A673 (cell line): ENCODE measurements at regions of chr4 and their contacts with region 1.

Region 1: DNA sequence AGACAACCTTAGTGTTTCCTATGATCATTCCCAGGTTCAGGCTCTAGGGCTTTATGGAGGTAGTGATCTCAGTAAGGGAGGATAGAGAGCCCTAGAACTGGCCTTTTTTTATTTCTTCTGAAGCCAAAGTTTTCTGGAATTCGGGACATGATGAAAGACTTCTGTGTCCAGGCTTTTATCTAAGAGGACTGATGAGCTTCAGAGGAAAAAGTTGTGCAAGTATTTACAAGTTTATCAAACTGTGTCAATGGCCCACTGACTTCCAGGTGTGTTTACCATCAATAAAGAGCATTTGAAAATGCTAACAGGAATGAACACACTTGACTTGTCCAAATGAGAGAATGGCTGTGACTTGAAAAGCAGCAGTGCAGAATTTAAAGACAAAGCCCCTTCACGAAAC is 254.6 kb downstream of the DCTD start:
- DNase-seq: no peak
- H3K4me3 ChIP-seq: no peak overlapping the region
- H3K27ac ChIP-seq: no peak overlapping the region
- H3K4me1 ChIP-seq: no peaks in the 10 kb centered on the region
- H3K27me3 ChIP-seq: no peaks in the 10 kb centered on the region
- CTCF ChIP-seq: no peak

Region 2: GRCh38 chr4:182619660-182620059 is 42.9 kb before region 1 on chr4:
- CTCF ChIA-PET with region 1: no interaction called
- POLR2A ChIA-PET with region 1: no interaction called
- intact Hi-C with region 1: loop called (anchors 5 kb)
- DNase-seq: no peak
- H3K4me3 ChIP-seq: no peak overlapping the region
- H3K27ac ChIP-seq: no peak overlapping the region
- H3K4me1 ChIP-seq: no peaks in the 10 kb centered on the region
- H3K27me3 ChIP-seq: no peaks in the 10 kb centered on the region
- CTCF ChIP-seq: no peak

Region 3: DNA sequence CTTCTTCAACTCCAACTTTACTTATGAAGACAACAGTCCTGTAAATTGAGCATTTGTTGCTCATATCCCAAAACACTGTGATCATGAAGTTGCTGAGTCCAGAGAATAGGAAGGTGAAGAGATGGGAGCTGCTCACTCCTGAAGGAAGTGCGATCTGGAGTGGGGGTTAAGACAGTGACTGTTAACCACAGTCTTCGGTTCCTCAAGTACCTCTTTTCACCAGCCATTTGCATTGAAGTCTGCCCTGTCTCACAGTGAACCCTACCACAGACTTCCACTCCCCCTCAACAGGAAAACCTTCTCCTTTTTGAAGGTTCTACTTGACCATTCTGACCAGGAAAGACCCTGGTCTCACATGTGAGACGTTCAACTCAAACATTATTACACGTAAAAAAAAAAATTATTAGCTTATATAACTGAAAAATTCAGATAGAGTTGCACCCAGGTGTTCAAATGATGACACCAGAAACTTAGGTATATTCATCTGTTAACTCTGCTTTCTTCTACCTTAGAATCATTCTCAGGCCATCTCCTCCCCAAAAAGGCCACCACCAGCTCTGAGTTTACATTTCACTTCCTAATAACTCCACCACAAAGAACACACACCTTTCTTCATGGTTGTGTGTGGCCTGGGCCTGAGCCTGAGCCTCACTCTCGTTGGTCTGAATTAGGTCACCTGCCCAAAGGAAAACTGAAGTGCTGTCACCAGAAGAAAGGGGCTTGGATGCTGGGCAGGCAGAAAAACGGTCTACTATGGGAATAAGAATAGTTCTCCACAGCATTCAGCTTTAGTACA is 55.4 kb after region 1 on chr4:
- CTCF ChIA-PET with region 1: no interaction called
- POLR2A ChIA-PET with region 1: no interaction called
- intact Hi-C with region 1: no loop called
- DNase-seq: no peak
- H3K4me3 ChIP-seq: no peak overlapping the region
- H3K27ac ChIP-seq: no peak overlapping the region
- H3K4me1 ChIP-seq: no peaks in the 10 kb centered on the region
- H3K27me3 ChIP-seq: no peaks in the 10 kb centered on the region
- CTCF ChIP-seq: no peak